Sigmoid colon (tissue), 7 donors: ENCODE measurements at regions of chr11 and their contacts with region 1.

Region 1: DNA sequence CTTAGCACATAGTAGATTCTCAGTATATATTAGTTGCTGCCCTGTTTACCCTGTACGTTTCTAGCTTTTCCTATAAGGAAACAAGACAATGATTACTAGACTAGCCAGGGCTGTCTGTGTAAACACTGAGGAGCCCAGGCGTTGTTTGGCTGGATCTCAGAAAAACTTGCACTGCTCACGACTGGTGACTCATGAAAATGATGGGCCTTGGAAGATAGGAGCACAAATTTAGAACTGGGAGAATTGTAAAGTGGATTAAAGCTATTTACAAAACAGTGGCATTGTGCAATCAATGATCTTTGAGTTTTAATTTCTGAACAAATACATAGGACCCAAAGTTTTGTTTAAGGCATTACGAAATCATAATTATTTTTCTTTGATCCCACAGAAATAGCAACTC is 276.9 kb downstream of the FAM76B start:
- DNase-seq: peak; percentile 89
- H3K4me3 ChIP-seq: no peak overlapping the region
- H3K27ac ChIP-seq: peak overlapping the region; percentile 67 to 81 (median 70)
- H3K4me1 ChIP-seq: peaks cover 0 to 29% (median 27%) of the 10 kb centered on the region in 4 donors
- H3K27me3 ChIP-seq: no peaks in the 10 kb centered on the region
- CTCF ChIP-seq: no peak
- EP300 ChIP-seq: no peak
- POLR2A ChIP-seq: no peak

Region 2: GRCh38 chr11:94747146-94748080 is 765.3 kb before region 1 on chr11:
- intact Hi-C with region 1: no loop called
- DNase-seq: no peak
- H3K4me3 ChIP-seq: no peak overlapping the region
- H3K27ac ChIP-seq: no peak overlapping the region
- H3K4me1 ChIP-seq: peaks cover 0 to 30% (median 23%) of the 10 kb centered on the region in 4 donors
- H3K27me3 ChIP-seq: no peaks in the 10 kb centered on the region
- CTCF ChIP-seq: no peak
- EP300 ChIP-seq: no peak
- POLR2A ChIP-seq: no peak

Region 3: GRCh38 chr11:95647355-95647754 is 134.7 kb after region 1 on chr11:
- intact Hi-C with region 1: loop called (anchors 5 kb)
- DNase-seq: peak; percentile 78
- H3K4me3 ChIP-seq: peak overlapping the region in 1 of 4 donors; percentile 14
- H3K27ac ChIP-seq: peak overlapping the region; percentile 76 to 83 (median 80)
- H3K4me1 ChIP-seq: peaks cover 0 to 26% (median 19%) of the 10 kb centered on the region in 4 donors
- H3K27me3 ChIP-seq: no peaks in the 10 kb centered on the region
- CTCF ChIP-seq: no peak
- EP300 ChIP-seq: peak; percentile 76 to 96 (median 92)
- POLR2A ChIP-seq: no peak

Region 4: DNA sequence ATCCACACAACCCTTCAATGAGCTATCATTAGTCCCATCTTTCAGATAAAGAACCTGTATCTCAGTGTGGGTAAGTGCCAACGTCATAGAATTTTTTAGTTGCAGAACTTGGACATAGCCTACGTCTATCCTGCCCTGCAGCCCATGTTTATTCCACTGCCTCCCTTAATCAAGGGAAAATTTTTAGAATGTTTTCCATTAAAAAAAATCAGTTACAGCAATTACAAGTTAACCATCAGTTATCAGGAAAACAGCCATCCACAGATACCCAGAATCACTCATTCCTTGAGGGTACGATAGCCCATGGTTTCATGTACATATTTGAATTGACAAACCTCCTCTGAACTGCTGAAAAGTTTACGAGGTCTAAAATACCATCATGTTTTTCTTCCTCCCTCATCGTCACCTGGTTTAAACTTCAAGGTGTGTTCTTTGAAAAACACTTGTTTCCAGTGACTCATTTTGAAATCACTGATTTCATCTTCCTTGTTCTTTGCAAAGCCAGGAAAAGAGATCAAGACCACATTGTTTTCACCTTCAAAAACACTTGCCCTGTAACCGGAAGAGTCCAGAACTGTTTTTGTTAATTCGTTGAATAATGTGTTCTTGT is 176.0 kb after region 1 on chr11:
- intact Hi-C with region 1: no loop called
- DNase-seq: no peak
- H3K4me3 ChIP-seq: no peak overlapping the region
- H3K27ac ChIP-seq: peak overlapping the region in 1 of 4 donors; percentile 22
- H3K4me1 ChIP-seq: no peaks in the 10 kb centered on the region
- H3K27me3 ChIP-seq: no peaks in the 10 kb centered on the region
- CTCF ChIP-seq: no peak
- EP300 ChIP-seq: no peak
- POLR2A ChIP-seq: no peak

Region 5: GRCh38 chr11:95699631-95700470 is 187.2 kb after region 1 on chr11:
- intact Hi-C with region 1: loop called (anchors 5 kb)
- DNase-seq: no peak
- H3K4me3 ChIP-seq: no peak overlapping the region
- H3K27ac ChIP-seq: no peak overlapping the region
- H3K4me1 ChIP-seq: peaks cover 0 to 31% (median 29%) of the 10 kb centered on the region in 4 donors
- H3K27me3 ChIP-seq: no peaks in the 10 kb centered on the region
- CTCF ChIP-seq: no peak
- EP300 ChIP-seq: no peak
- POLR2A ChIP-seq: no peak